Activated naive CD4-positive, alpha-beta T cell treated with anti-CD3 and anti-CD28 coated beads for 36 hours (primary cell): ENCODE measurements at regions of chrX and their contacts with region 1.

Region 1: DNA sequence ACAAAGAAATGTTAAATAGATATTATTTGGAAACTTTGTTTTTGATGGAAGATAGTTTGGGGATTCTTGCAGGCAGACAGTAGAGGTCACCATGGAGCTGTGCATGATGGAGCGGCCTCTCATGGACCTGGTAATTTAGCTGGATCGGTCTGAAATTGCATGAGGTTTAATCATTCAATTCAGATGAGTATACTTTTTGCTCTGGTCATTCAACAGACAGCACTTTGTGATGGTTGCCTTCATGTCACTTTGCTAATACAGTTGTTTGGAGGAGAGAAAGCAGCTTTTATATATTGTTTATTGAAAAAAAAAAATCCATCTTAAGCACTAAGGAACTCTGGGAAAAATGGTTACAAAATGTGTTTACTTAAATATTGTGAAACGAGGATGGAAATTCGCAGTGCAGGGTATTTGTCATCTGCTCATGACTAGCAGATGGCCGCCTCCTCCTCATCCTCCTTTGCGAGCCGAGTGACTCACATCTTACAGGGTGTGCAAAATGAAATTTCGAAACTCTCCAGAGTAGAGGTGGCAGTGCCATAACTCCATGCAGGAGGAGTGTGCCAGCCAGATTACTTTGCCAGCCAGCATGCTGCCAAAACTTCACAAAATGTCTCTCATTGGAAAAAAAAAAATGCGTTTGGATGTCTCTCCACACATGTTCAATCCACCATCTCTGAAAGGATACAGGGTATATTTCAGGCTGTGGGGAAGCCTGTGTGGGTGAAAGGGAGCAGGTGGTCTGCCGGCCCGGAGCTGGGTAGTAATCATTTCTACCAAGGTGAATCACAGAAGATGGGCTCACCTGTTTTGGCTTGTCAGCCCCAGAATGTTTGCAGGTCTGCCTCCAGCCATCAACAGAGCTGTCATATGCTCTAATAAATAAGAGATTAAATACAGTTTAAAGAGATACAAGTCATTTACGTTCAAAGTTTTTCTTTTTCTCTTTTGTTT is 314.9 kb upstream of the DIPK2B start:
- DNase-seq: peak; percentile 45
- H3K4me3 Mint-ChIP-seq: no peak overlapping the region
- H3K27ac Mint-ChIP-seq: peak overlapping the region; percentile 18
- H3K4me1 Mint-ChIP-seq: peaks cover 17% of the 10 kb centered on the region
- H3K27me3 Mint-ChIP-seq: peaks cover 4% of the 10 kb centered on the region

Region 2: GRCh38 chrX:45710081-45710801 is 194.7 kb after region 1 on chrX:
- CTCF ChIA-PET with region 1: no interaction called
- intact Hi-C with region 1: loop called (anchors 10 kb)
- DNase-seq: peak; percentile 71
- H3K4me3 Mint-ChIP-seq: no peak overlapping the region
- H3K27ac Mint-ChIP-seq: peak overlapping the region; percentile 69
- H3K4me1 Mint-ChIP-seq: peaks cover 42% of the 10 kb centered on the region
- H3K27me3 Mint-ChIP-seq: no peaks in the 10 kb centered on the region

Region 3: GRCh38 chrX:45749375-45749774 is 233.8 kb after region 1 on chrX:
- CTCF ChIA-PET with region 1: no interaction called
- intact Hi-C with region 1: loop called (anchors 2 kb)
- DNase-seq: peak; percentile 17
- H3K4me3 Mint-ChIP-seq: no peak overlapping the region
- H3K27ac Mint-ChIP-seq: peak overlapping the region; percentile 72
- H3K4me1 Mint-ChIP-seq: peaks cover 10% of the 10 kb centered on the region
- H3K27me3 Mint-ChIP-seq: no peaks in the 10 kb centered on the region

Region 4: GRCh38 chrX:45843518-45843917 is 328.0 kb after region 1 on chrX:
- CTCF ChIA-PET with region 1: no interaction called
- intact Hi-C with region 1: loop called (anchors 1 kb)
- DNase-seq: peak; percentile 11
- H3K4me3 Mint-ChIP-seq: no peak overlapping the region
- H3K27ac Mint-ChIP-seq: peak overlapping the region; percentile 80
- H3K4me1 Mint-ChIP-seq: peaks cover 54% of the 10 kb centered on the region
- H3K27me3 Mint-ChIP-seq: no peaks in the 10 kb centered on the region

Region 5: GRCh38 chrX:46376246-46376885 is 860.8 kb after region 1 on chrX:
- CTCF ChIA-PET with region 1: interaction called, 4 read pairs
- intact Hi-C with region 1: loop called (anchors 1 kb)
- DNase-seq: peak; percentile 56
- H3K4me3 Mint-ChIP-seq: no peak overlapping the region
- H3K27ac Mint-ChIP-seq: no peak overlapping the region
- H3K4me1 Mint-ChIP-seq: peaks cover 20% of the 10 kb centered on the region
- H3K27me3 Mint-ChIP-seq: no peaks in the 10 kb centered on the region

Region 6: DNA sequence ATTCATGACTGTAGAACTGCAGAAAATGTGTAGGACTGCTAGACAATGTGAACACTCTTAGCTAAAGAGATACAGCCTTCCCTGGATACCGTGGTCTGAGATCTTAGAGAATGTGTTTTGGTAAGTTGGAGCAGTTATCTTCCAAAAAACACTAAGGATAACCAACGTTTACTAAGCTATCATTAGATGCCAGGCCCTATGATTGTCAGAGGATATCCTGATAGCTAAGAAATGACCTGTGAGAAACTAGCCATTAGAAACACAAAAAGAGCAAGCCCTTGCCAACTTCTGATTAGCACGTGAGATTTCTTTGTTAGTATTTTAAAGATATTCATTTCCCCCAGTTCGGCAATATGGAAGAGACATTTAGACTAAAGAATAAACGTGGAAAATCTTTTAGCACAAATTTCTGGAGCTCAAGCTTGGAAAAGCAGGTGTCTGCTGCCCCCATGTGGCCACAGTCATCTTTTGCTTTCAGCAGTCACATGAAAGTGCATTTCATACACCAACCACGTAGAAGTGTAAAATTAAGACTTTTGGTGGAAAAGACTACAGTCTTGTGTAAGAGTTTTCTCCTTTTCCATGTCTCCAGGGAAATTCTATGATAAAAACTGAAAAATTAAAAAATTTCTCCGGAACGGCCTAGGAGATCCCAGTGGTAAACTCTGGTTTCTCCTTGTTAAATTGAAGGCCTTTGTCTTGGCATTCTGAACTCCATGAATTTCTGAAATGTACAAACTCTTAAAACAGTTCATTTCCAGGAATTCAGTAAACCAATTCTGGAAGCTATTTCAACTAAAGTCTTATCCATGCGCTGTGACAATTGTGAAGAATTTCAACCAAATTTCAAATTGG is 893.2 kb after region 1 on chrX:
- CTCF ChIA-PET with region 1: interaction called, 6 read pairs
- intact Hi-C with region 1: loop called (anchors 10 kb)
- DNase-seq: peak; percentile 81
- H3K4me3 Mint-ChIP-seq: no peak overlapping the region
- H3K27ac Mint-ChIP-seq: no peak overlapping the region
- H3K4me1 Mint-ChIP-seq: no peaks in the 10 kb centered on the region
- H3K27me3 Mint-ChIP-seq: no peaks in the 10 kb centered on the region